Calu3 (cell line): ENCODE measurements at regions of chr11 and their contacts with region 1.

Region 1: DNA sequence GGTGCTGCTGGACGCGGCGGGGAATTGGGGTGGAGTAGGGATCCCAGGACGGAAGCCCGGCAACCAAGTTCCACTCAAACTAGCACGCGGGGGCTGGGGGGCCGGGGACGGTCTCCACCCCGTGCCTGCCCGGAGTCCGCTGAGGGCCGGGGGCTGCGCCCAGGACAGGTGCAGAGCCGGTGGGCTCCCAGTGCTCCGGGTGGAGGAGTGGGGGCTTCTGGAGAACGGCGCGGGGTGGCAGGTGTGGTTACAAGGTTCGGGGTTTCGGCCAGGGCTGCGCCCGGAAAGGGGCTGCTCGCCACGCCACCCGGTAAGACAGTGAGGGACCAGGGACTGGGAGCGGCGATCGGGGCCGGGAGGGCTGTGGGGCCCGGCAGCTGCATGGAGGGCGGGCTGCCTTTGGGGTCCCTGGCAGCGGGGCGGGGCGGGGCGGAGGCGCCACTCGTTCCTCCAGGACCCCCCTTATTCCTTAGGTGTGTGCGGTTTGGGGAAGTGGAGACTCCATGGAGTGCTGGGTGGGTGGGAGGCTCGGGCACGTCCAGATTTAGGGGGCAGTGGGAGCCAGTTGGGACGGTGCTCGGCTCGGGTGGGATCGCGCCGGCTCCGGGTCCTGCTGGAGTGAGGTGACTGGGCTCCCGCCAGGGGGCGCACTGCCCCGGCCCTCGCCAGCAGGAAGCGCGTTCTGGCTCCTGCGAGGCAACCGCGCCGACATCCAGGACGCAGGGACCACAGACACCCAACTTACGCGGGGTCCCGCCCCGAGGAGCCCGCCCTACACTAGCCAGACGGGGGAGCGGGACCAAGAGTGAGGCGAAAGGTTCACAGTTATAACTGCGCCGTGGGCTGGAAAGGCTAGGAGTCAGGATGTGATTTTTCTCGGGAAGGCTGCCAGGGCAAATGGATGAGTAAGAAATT is 868 bp downstream of the TSPAN18 start:
- DNase-seq: peak; percentile 84
- H3K4me3 Mint-ChIP-seq: peak overlapping the region; percentile 65
- H3K27ac Mint-ChIP-seq: no peak overlapping the region
- H3K4me1 Mint-ChIP-seq: no peaks in the 10 kb centered on the region
- H3K27me3 Mint-ChIP-seq: peaks cover 70% of the 10 kb centered on the region
- CTCF ChIP-seq: peak; percentile 94

Region 2: GRCh38 chr11:44627911-44628729 is 99.5 kb before region 1 on chr11:
- CTCF ChIA-PET with region 1: no interaction called
- intact Hi-C with region 1: loop called (anchors 5 kb)
- DNase-seq: no peak
- H3K4me3 Mint-ChIP-seq: no peak overlapping the region
- H3K27ac Mint-ChIP-seq: no peak overlapping the region
- H3K4me1 Mint-ChIP-seq: no peaks in the 10 kb centered on the region
- H3K27me3 Mint-ChIP-seq: peaks cover 84% of the 10 kb centered on the region
- CTCF ChIP-seq: no peak

Region 3: DNA sequence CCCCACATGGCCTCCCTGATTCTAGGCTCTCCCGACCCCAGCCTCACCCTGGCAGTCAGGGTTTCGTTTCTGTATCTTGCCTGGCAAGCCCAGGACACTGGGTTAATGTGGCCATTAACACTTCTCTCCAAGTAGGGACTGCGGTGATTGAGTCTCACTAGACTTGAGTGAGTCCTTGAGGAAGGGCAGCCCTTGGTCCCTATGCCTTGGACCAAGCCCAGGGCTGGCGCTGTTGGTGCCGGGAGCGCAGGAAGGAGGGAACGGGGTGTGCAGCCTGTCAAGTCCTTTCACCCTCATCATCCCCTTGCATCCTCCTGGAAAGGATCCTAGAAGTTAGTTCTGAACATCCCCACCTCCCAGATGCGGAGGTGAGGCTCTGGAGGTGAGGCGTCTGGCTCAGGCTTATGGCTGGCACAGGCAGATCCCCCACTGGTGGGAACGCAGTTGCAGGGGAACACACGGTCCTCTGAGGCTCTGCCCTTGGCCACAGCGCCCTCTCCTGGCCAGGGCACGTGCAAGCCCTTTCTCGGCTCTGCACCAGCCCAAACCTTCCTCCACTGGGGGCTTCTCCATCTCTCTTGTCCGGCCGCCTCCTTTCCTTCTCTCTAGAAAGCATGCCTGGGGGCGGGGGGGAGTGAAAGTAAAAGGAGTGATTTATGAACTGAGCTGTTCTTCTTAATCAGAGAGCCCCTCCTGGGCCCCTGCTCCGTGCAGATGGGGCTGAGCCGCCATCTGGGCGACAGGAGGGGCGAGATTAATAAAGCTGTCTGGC is 166.4 kb after region 1 on chr11:
- CTCF ChIA-PET with region 1: no interaction called
- intact Hi-C with region 1: loop called (anchors 5 kb)
- DNase-seq: peak; percentile 69
- H3K4me3 Mint-ChIP-seq: no peak overlapping the region
- H3K27ac Mint-ChIP-seq: no peak overlapping the region
- H3K4me1 Mint-ChIP-seq: no peaks in the 10 kb centered on the region
- H3K27me3 Mint-ChIP-seq: peaks cover 55% of the 10 kb centered on the region
- CTCF ChIP-seq: peak; percentile 86

Region 4: DNA sequence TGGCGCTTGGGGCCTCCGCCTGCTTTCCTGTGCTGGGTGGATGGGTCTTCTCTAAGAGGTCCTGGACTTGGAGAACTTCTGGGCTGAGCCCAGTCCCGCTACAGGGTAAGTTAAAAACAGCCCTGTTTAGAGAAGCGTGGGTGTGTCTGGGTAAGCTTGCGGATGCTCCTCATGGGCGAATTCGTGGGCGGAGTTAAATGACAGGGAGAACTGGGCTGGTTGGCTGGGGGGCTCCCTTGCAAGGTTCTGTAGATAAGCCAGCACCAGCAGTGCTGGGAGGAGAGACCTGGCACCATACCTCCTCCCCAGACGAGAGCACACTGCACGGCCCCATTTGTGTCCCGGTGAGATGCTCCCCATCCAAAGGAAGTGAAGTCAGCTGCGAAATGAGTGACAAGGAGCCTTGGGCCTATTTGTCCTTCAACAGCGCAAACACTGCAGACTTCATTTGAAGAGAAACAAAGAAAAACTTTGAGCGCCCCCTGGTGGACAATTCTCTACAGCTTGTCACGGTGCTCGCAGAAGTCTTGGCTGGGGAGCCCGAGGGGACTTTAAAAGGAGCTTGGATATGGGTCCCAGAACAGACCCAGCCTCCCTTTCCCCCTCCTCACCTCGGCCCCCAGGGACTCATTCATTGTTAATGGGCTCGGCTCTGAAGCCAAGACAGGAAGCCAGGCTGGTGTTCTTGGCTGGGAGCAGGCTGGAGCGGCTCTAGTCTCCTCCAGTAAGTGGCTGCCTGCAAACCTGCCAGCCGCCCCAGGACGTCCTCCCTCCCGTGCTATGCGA is 183.6 kb after region 1 on chr11:
- CTCF ChIA-PET with region 1: interaction called, 3 read pairs
- intact Hi-C with region 1: loop called (anchors 1 kb)
- DNase-seq: peak; percentile 90
- H3K4me3 Mint-ChIP-seq: no peak overlapping the region
- H3K27ac Mint-ChIP-seq: no peak overlapping the region
- H3K4me1 Mint-ChIP-seq: no peaks in the 10 kb centered on the region
- H3K27me3 Mint-ChIP-seq: peaks cover 73% of the 10 kb centered on the region
- CTCF ChIP-seq: peak; percentile 77